B cell (primary cell): ENCODE measurements at regions of chr2 and their contacts with region 1.

Region 1: DNA sequence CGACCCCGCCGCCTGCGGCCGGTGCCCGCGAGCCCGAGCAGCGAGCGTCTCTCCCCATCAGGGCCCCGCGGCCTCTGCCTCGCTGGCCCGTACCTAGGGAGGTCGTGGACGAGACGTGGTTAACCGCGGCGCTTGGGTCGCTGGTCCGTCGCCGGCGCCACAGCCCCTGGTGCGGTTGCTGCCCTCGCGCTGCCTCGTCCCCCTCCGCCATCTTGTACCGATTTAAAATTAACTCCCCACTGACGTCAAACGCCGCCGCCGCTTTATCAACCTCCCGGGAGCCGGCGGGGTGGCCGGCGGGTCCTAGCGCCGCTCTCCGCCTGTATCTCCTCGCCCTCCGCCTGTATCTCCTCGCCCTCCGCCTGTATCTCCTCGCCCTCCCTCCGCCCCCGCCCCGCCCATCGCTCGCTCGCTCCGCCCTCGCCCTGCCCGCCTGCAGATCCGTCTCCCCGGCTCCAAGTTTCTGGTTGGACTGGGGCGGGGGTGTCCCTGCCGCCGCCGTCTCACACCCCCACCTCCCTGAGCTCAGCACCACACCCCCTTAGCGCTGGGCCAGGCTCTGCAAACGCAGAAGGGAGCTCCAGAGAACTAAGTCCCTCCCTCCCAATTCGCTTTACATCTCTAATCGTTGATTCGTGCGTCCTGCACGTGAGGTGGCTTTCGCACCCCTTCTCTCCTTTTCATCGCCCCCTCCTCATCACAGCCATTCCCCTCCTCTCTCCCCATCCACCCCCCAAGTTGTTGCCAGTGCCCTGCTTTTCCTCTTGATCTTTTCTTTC is at the start of gene ATL2:
- DNase-seq: peak; percentile 95
- ATAC-seq: peak; percentile 83
- H3K4me3 ChIP-seq: peak within 1 kb of the TSS; percentile 78 to 91 (median 87)
- H3K4me3 Mint-ChIP-seq: peak within 1 kb of the TSS; percentile 98
- H3K27ac ChIP-seq: peak within 1 kb of the TSS; percentile 91
- H3K27ac Mint-ChIP-seq: peak within 1 kb of the TSS; percentile 96
- H3K4me1 ChIP-seq: peaks cover 17 to 23% of the 10 kb centered on the region in 2 donors
- H3K4me1 Mint-ChIP-seq: peaks cover 50% of the 10 kb centered on the region
- H3K27me3 ChIP-seq: no peaks in the 10 kb centered on the region
- H3K27me3 Mint-ChIP-seq: no peaks in the 10 kb centered on the region
- CTCF ChIP-seq: no peak
- total RNA-seq, gene ATL2: 69.0 and 78.0 TPM in 2 replicates

Region 2: DNA sequence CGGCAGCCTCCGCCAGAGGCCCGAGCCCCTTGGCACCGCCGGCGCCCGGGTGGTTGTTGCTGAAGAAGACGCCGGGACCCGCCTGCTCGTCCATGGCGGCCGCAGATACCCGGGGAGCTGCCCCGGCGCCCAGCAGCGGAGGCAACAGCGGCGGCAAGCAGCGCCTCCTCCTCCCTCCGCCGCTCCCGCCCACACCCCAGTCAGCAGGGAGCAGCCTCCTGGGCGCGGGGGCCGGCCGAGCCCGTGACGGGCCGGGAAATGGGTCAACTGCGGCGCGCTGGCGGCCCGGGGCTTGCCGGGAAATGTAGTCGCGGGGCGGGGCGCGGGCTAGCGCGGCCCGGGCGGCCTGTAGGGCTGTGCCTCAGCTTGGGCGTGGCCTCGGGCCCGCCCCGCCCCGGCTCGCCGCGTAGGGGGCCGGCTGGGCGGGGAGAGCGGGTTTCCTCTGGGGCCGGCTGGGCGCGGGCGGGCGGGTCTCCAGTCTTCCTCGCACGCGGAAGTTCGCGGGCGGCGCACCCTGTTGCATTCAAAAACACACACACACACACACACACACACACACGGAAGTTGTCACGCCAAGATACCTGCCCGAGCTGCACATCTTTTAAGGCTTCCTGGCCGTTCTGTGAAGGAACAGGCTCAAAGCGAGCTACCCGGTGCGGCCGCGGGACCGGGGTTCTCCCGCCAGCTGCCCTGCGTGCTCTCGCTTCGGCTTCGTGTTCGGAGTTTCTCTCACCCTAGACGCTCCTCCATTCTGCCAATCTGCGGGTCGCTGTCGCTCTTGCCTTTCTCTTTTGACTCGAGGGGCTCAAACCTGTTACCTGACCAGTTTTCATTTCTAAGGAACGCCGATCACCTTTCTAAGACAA is 1410.6 kb before region 1 on chr2 and contains the start of gene STRN:
- CTCF ChIA-PET with region 1: no interaction called
- POLR2A ChIA-PET with region 1: no interaction called
- intact Hi-C with region 1: loop called (anchors 5 kb)
- DNase-seq: peak; percentile 99
- ATAC-seq: peak; percentile 91
- H3K4me3 ChIP-seq: peak within 1 kb of the TSS; percentile 66 to 91 (median 79)
- H3K4me3 Mint-ChIP-seq: peak within 1 kb of the TSS; percentile 99
- H3K27ac ChIP-seq: peak within 1 kb of the TSS; percentile 72 to 89
- H3K27ac Mint-ChIP-seq: peak within 1 kb of the TSS; percentile 94
- H3K4me1 ChIP-seq: peaks cover 21 to 23% of the 10 kb centered on the region in 2 donors
- H3K4me1 Mint-ChIP-seq: peaks cover 33% of the 10 kb centered on the region
- H3K27me3 ChIP-seq: no peaks in the 10 kb centered on the region
- H3K27me3 Mint-ChIP-seq: no peaks in the 10 kb centered on the region
- CTCF ChIP-seq: no peak
- total RNA-seq, gene STRN: 38.6 and 42.8 TPM in 2 replicates

Region 3: GRCh38 chr2:37925063-37925897 is 452.0 kb before region 1 on chr2 and contains the start of gene RMDN2:
- CTCF ChIA-PET with region 1: no interaction called
- POLR2A ChIA-PET with region 1: no interaction called
- intact Hi-C with region 1: loop called (anchors 1 kb)
- DNase-seq: peak; percentile 92
- ATAC-seq: peak; percentile 85
- H3K4me3 ChIP-seq: peak within 1 kb of the TSS; percentile 61 to 86 (median 81)
- H3K4me3 Mint-ChIP-seq: peak within 1 kb of the TSS; percentile 96
- H3K27ac ChIP-seq: peak within 1 kb of the TSS; percentile 84
- H3K27ac Mint-ChIP-seq: peak within 1 kb of the TSS; percentile 96
- H3K4me1 ChIP-seq: peaks cover 13 to 15% of the 10 kb centered on the region in 2 donors
- H3K4me1 Mint-ChIP-seq: peaks cover 34% of the 10 kb centered on the region
- H3K27me3 ChIP-seq: no peaks in the 10 kb centered on the region
- H3K27me3 Mint-ChIP-seq: peaks cover 7% of the 10 kb centered on the region
- CTCF ChIP-seq: peak; percentile 40
- total RNA-seq, gene RMDN2: 6.4 and 6.6 TPM in 2 replicates

Region 4: GRCh38 chr2:38465789-38466127 is 88.5 kb after region 1 on chr2:
- CTCF ChIA-PET with region 1: no interaction called
- POLR2A ChIA-PET with region 1: no interaction called
- intact Hi-C with region 1: loop called (anchors 5 kb)
- DNase-seq: peak; percentile 30
- ATAC-seq: no peak
- H3K4me3 ChIP-seq: no peak overlapping the region
- H3K4me3 Mint-ChIP-seq: no peak overlapping the region
- H3K27ac ChIP-seq: no peak overlapping the region
- H3K27ac Mint-ChIP-seq: no peak overlapping the region
- H3K4me1 ChIP-seq: no peaks in the 10 kb centered on the region
- H3K4me1 Mint-ChIP-seq: no peaks in the 10 kb centered on the region
- H3K27me3 ChIP-seq: no peaks in the 10 kb centered on the region
- H3K27me3 Mint-ChIP-seq: peaks cover 16% of the 10 kb centered on the region
- CTCF ChIP-seq: peak; percentile 18

Region 5: GRCh38 chr2:38602732-38603401 is 225.6 kb after region 1 on chr2 and contains the start of gene HNRNPLL:
- CTCF ChIA-PET with region 1: no interaction called
- POLR2A ChIA-PET with region 1: no interaction called
- intact Hi-C with region 1: loop called (anchors 5 kb)
- DNase-seq: peak; percentile 89
- ATAC-seq: peak; percentile 86
- H3K4me3 ChIP-seq: peak within 1 kb of the TSS; percentile 71 to 83 (median 81)
- H3K4me3 Mint-ChIP-seq: peak within 1 kb of the TSS; percentile 93
- H3K27ac ChIP-seq: peak within 1 kb of the TSS in 1 of 2 donors; percentile 38
- H3K27ac Mint-ChIP-seq: peak within 1 kb of the TSS; percentile 86
- H3K4me1 ChIP-seq: peaks cover 13 to 27% of the 10 kb centered on the region in 2 donors
- H3K4me1 Mint-ChIP-seq: peaks cover 22% of the 10 kb centered on the region
- H3K27me3 ChIP-seq: peaks cover 0 to 52% (median 32%) of the 10 kb centered on the region in 4 experiments
- H3K27me3 Mint-ChIP-seq: peaks cover 35% of the 10 kb centered on the region
- CTCF ChIP-seq: no peak
- total RNA-seq, gene HNRNPLL: 5.8 and 6.7 TPM in 2 replicates

Region 6: DNA sequence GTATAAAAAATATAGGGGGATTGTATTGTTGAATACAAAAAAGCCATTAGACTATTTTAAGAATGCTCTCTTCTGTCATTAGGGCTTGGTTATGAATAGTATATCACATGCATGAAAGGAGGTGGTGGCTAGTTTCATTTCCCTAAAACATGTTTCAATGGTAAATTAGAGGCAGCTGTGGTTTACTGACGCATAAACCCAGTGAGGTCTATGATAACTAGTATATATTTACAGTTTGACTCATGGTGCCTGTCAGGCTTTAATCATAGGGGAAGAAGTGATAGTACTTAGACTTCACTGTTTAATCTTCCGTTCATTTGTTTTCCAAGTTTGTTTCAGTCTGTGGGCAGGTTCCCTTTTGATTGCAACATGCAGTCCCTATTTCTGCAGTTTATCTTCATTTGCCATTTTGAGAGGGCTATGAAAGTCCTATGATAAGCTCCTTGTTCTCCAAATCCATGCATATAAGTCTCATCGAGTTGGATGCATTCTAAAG is 1114.9 kb after region 1 on chr2:
- CTCF ChIA-PET with region 1: no interaction called
- POLR2A ChIA-PET with region 1: no interaction called
- intact Hi-C with region 1: loop called (anchors 5 kb)
- DNase-seq: peak; percentile 91
- ATAC-seq: peak; percentile 91
- H3K4me3 ChIP-seq: peak overlapping the region in 3 of 5 experiments; percentile 13 to 56 (median 26)
- H3K4me3 Mint-ChIP-seq: peak overlapping the region; percentile 81
- H3K27ac ChIP-seq: peak overlapping the region; percentile 80 to 81
- H3K27ac Mint-ChIP-seq: peak overlapping the region; percentile 88
- H3K4me1 ChIP-seq: peaks cover 35 to 43% of the 10 kb centered on the region in 2 donors
- H3K4me1 Mint-ChIP-seq: peaks cover 44% of the 10 kb centered on the region
- H3K27me3 ChIP-seq: peaks cover 0 to 21% (median 4%) of the 10 kb centered on the region in 4 experiments
- H3K27me3 Mint-ChIP-seq: peaks cover 18% of the 10 kb centered on the region
- CTCF ChIP-seq: no peak